Ovary (tissue), 10 donors: ENCODE measurements at regions of chr5 and their contacts with region 1.

Region 1: GRCh38 chr5:117454716-117455596 is 880.3 kb upstream of the SEMA6A start:
- DNase-seq: peak; percentile 5 to 53 (median 31)
- H3K4me3 ChIP-seq: peak overlapping the region; percentile 5
- H3K27ac ChIP-seq: no peak overlapping the region
- H3K4me1 ChIP-seq: no peaks in the 10 kb centered on the region
- H3K27me3 ChIP-seq: no peaks in the 10 kb centered on the region
- CTCF ChIP-seq: peak; percentile 34 to 58 (median 46)
- EP300 ChIP-seq: no peak
- POLR2A ChIP-seq: no peak

Region 2: DNA sequence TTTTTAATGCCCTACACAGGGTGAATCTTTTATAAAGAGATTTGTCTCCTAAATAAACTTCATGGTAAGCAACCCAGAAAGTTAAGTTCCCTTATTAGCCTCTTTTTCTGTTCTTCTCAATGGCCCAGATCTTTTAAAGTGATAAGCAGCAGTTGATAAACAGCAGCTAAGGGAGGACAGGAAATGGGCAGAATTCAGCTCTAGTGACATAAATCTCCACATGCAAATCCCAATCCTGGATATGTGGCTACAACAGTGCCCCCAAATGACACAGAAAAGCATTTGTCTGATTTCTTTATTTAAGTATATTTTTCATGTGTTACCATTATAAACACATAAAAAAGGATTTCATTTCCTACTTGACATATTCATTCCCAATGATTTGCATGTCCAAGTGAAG is 1334.4 kb after region 1 on chr5:
- intact Hi-C with region 1: loop called in 1 of 4 experiments (anchors 10 kb)
- DNase-seq: no peak
- H3K4me3 ChIP-seq: no peak overlapping the region
- H3K27ac ChIP-seq: no peak overlapping the region
- H3K4me1 ChIP-seq: peaks cover 5% of the 10 kb centered on the region
- H3K27me3 ChIP-seq: no peaks in the 10 kb centered on the region
- CTCF ChIP-seq: no peak
- EP300 ChIP-seq: no peak
- POLR2A ChIP-seq: no peak